Gastrocnemius medialis (tissue), 4 donors: ENCODE measurements at regions of chr1 and their contacts with region 1.

Region 1: DNA sequence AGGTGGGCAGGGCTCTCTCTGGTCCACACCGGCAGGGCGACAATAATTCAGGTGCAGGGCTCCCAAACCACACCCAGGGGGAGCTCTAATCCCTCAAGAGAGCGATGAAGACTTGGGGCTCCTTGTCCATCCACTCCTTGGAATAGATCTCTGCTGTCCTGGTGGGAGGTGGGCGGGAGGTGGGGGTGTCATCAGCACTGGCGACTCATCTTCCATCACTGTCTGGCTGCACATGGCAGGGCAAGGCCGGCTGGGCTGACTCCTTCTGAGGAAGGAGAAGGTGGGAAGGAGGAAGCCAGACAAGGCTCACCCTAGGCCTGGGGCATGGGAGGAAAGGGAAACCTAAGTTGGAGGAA is 29.3 kb downstream of the TNNT2 start:
- DNase-seq: no peak
- ATAC-seq: peak in 1 of 2 donors; percentile 45
- H3K4me3 ChIP-seq: no peak overlapping the region
- H3K27ac ChIP-seq: no peak overlapping the region
- H3K4me1 ChIP-seq: no peaks in the 10 kb centered on the region
- H3K27me3 ChIP-seq: no peaks in the 10 kb centered on the region
- CTCF ChIP-seq: peak; percentile 18 to 58 (median 49)
- POLR2A ChIP-seq: no peak

Region 2: GRCh38 chr1:201295861-201296260 is 52.3 kb before region 1 on chr1:
- in situ Hi-C with region 1: no loop called
- intact Hi-C with region 1: no loop called
- DNase-seq: no peak
- ATAC-seq: no peak
- H3K4me3 ChIP-seq: no peak overlapping the region
- H3K27ac ChIP-seq: no peak overlapping the region
- H3K4me1 ChIP-seq: no peaks in the 10 kb centered on the region
- H3K27me3 ChIP-seq: peaks cover 0 to 8% (median 4%) of the 10 kb centered on the region in 3 donors
- CTCF ChIP-seq: no peak
- POLR2A ChIP-seq: no peak

Region 3: GRCh38 chr1:201309426-201309825 is 38.8 kb before region 1 on chr1:
- in situ Hi-C with region 1: no loop called
- intact Hi-C with region 1: loop called (anchors 5 kb)
- DNase-seq: peak; percentile 83 to 91
- ATAC-seq: peak; percentile 91 to 92
- H3K4me3 ChIP-seq: no peak overlapping the region
- H3K27ac ChIP-seq: peak overlapping the region; percentile 60 to 78 (median 72)
- H3K4me1 ChIP-seq: peaks cover 21 to 28% of the 10 kb centered on the region in 2 donors
- H3K27me3 ChIP-seq: no peaks in the 10 kb centered on the region
- CTCF ChIP-seq: peak in 2 of 5 experiments; percentile 33 to 35
- POLR2A ChIP-seq: peak in 1 of 2 donors; percentile 27

Region 4: DNA sequence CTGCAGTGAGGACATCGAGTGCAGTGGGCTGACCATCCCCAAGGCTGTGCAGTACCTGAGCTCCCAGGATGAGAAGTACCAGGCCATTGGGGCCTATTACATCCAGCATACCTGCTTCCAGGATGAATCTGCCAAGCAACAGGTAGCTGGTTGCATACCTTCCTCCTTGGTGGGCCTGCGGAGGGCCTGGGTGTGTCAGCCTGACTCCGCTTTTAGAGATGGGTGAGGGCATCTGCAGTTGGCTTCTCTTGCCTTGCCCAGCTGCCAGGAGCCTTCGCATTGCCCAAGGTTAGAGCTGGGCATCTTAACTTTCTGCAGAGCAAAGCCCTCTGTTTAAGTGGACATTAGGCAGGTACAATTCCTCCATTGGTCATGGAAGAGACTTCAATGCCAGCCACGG is 31.6 kb before region 1 on chr1:
- in situ Hi-C with region 1: no loop called
- intact Hi-C with region 1: loop called (anchors 1 kb)
- DNase-seq: no peak
- ATAC-seq: no peak
- H3K4me3 ChIP-seq: no peak overlapping the region
- H3K27ac ChIP-seq: no peak overlapping the region
- H3K4me1 ChIP-seq: no peaks in the 10 kb centered on the region
- H3K27me3 ChIP-seq: no peaks in the 10 kb centered on the region
- CTCF ChIP-seq: no peak
- POLR2A ChIP-seq: no peak

Region 5: DNA sequence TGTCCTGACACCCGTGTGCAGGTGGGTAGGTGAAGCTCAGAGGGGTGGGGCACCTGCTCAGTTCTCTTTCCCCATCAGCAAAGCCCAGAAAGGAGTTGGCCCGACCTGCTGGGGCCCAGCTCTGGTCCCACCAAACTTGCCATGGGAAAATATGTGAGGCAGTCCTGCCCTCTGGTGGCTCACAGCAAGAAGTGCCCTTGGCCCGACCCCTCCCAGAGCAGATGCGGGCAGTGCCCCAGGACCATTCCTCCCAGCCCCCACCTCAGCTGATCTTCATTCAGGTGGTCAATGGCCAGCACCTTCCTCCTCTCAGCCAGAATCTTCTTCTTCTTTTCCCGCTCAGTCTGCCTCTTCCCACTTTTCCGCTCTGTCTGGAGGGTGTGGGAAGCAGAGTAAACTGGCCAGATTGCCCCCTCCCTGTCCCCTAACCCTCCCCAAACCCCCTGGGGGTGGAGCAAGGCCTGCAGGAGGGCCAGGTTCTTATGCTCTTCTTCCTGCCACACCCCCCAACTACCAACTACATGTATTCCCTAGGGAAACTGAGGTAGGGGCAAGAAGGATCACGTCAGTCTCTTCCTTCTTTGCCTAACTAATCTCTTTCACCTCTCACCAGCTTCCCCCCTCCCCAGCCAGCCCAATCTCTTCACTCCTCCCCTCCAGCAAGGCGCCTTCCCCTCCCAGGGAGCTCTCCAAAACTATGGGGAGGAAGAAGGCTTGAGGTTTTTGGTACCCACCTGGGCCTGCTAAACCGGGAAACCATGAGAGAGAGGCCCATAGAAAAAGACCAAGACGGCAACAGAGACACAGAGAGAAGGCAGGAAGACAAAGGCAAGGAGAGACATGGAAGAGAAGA is 13.7 kb after region 1 on chr1:
- in situ Hi-C with region 1: no loop called
- intact Hi-C with region 1: no loop called
- DNase-seq: peak in 1 of 2 donors; percentile 35
- ATAC-seq: peak in 1 of 2 donors; percentile 58
- H3K4me3 ChIP-seq: no peak overlapping the region
- H3K27ac ChIP-seq: no peak overlapping the region
- H3K4me1 ChIP-seq: peaks cover 0 to 4% of the 10 kb centered on the region in 2 donors
- H3K27me3 ChIP-seq: no peaks in the 10 kb centered on the region
- CTCF ChIP-seq: peak; percentile 70 to 88 (median 85)
- POLR2A ChIP-seq: no peak